Thyroid gland (tissue), 4 donors: ENCODE measurements at regions of chr7 and their contacts with region 1.

Region 1: DNA sequence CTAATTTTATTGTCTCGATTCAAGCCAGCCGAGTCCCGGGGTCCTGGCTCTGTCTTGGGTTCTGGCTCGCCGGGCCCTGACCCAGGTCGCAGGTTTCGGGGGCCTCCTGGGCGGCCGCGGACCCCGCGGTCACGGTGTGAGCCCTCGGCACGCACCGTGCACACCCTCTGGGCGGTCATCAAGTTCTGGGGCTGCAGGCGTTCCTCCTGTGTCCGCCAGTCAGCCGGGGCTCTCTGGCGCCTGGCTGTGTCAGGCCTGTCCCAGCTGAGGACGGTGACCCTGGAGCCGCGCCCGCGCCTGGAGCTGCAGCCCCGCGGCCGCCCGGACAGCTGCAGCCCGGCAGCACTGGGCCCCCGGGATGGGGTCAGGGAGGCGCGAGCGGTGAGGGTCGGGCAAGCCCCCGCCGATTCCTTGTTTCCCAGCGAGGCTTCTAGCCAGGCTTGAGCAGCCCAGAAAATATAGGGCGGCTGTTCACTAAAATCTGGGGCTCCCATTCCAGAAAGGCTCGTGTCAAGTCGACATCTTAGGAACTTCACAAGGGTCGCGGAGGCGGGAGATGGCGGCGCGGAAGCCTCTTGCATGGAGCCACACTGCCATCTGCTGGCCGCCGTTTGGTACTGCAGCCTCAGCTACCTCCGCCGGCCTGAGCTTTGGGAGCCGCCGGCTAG is 4.2 kb upstream of the HOXA7 start:
- DNase-seq: peak; percentile 82 to 86
- H3K4me3 ChIP-seq: peak overlapping the region in 2 of 3 donors; percentile 26 to 42
- H3K27ac ChIP-seq: no peak overlapping the region
- H3K4me1 ChIP-seq: peaks cover 12 to 32% of the 10 kb centered on the region in 2 donors
- H3K27me3 ChIP-seq: peaks cover 64% of the 10 kb centered on the region
- CTCF ChIP-seq: peak; percentile 90 to 100 (median 98)
- POLR2A ChIP-seq: no peak

Region 2: GRCh38 chr7:26376175-26376917 is 784.3 kb before region 1 on chr7:
- intact Hi-C with region 1: loop called (anchors 5 kb)
- DNase-seq: peak in 1 of 2 donors; percentile 4
- H3K4me3 ChIP-seq: peak overlapping the region in 1 of 3 donors; percentile 9
- H3K27ac ChIP-seq: no peak overlapping the region
- H3K4me1 ChIP-seq: peaks cover 9 to 13% of the 10 kb centered on the region in 2 donors
- H3K27me3 ChIP-seq: peaks cover 31% of the 10 kb centered on the region
- CTCF ChIP-seq: no peak
- POLR2A ChIP-seq: no peak

Region 3: GRCh38 chr7:26681819-26682418 is 478.8 kb before region 1 on chr7:
- intact Hi-C with region 1: loop called (anchors 2 kb)
- DNase-seq: no peak
- H3K4me3 ChIP-seq: no peak overlapping the region
- H3K27ac ChIP-seq: no peak overlapping the region
- H3K4me1 ChIP-seq: no peaks in the 10 kb centered on the region
- H3K27me3 ChIP-seq: no peaks in the 10 kb centered on the region
- CTCF ChIP-seq: peak in 5 of 6 experiments; percentile 37 to 80 (median 51)
- POLR2A ChIP-seq: no peak